ENCODE measurements at regions of chr9 and their contacts with region 1.

Region 1: GRCh38 chr9:84404095-84404686 is 63.6 kb upstream of the SLC28A3 start:
- DNase-seq: peak; percentile 22 to 34
- H3K4me3 ChIP-seq: no peak overlapping the region
- H3K27ac ChIP-seq: no peak overlapping the region
- H3K4me1 ChIP-seq: no peaks in the 10 kb centered on the region
- H3K27me3 ChIP-seq: no peaks in the 10 kb centered on the region
- CTCF ChIP-seq: peak; percentile 29 to 84 (median 70)
- POLR2A ChIP-seq: no peak

Region 2: DNA sequence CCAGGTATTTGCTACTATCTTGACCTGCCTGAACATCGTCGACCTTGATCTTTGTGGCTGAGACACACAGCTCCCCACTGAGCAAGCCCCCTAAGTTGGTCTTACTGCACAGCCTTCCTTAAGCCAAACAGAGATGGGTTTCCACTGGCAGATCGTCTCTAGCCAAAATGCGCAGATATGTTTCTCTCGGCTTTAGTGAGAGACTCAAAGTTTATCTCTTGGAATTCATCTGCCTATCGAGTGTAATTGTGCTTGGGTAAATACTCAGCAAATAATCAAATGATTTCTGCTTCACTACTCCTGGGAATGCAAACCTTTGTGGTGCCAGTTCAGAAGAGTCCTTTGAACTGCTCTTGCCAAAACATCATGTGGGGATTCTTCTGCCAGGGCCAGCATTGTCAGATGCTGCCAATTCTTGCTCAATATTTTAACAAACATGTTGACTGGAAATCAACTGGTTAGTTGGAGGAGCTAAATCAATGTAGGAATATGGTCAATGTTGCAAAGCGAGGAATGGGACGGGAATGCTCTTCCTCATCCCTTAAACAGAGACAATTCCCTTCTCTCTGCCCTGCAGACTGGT is 77.5 kb after region 1 on chr9:
- intact Hi-C with region 1: no loop called
- DNase-seq: peak; percentile 53 to 60
- H3K4me3 ChIP-seq: no peak overlapping the region
- H3K27ac ChIP-seq: peak overlapping the region; percentile 66 to 84 (median 76)
- H3K4me1 ChIP-seq: peaks cover 28 to 59% of the 10 kb centered on the region in 2 donors
- H3K27me3 ChIP-seq: no peaks in the 10 kb centered on the region
- CTCF ChIP-seq: no peak
- POLR2A ChIP-seq: no peak

Region 3: GRCh38 chr9:84668196-84669012 is 264.2 kb after region 1 on chr9:
- intact Hi-C with region 1: loop called (anchors 5 kb)
- DNase-seq: peak; percentile 92
- H3K4me3 ChIP-seq: peak overlapping the region; percentile 44 to 94 (median 45)
- H3K27ac ChIP-seq: peak overlapping the region; percentile 57 to 93 (median 89)
- H3K4me1 ChIP-seq: no peaks in the 10 kb centered on the region
- H3K27me3 ChIP-seq: no peaks in the 10 kb centered on the region
- CTCF ChIP-seq: peak; percentile 21 to 96 (median 75)
- POLR2A ChIP-seq: peak in 1 of 2 donors; percentile 37

Region 4: GRCh38 chr9:84759300-84759750 is 355.1 kb after region 1 on chr9:
- intact Hi-C with region 1: no loop called
- DNase-seq: no peak
- H3K4me3 ChIP-seq: no peak overlapping the region
- H3K27ac ChIP-seq: no peak overlapping the region
- H3K4me1 ChIP-seq: no peaks in the 10 kb centered on the region
- H3K27me3 ChIP-seq: no peaks in the 10 kb centered on the region
- CTCF ChIP-seq: no peak
- POLR2A ChIP-seq: no peak

Region 5: GRCh38 chr9:84781458-84781857 is 377.3 kb after region 1 on chr9:
- intact Hi-C with region 1: loop called (anchors 10 kb)
- DNase-seq: peak; percentile 24 to 29
- H3K4me3 ChIP-seq: no peak overlapping the region
- H3K27ac ChIP-seq: no peak overlapping the region
- H3K4me1 ChIP-seq: no peaks in the 10 kb centered on the region
- H3K27me3 ChIP-seq: no peaks in the 10 kb centered on the region
- CTCF ChIP-seq: peak in 4 of 6 experiments; percentile 31 to 66 (median 54)
- POLR2A ChIP-seq: no peak

Region 6: DNA sequence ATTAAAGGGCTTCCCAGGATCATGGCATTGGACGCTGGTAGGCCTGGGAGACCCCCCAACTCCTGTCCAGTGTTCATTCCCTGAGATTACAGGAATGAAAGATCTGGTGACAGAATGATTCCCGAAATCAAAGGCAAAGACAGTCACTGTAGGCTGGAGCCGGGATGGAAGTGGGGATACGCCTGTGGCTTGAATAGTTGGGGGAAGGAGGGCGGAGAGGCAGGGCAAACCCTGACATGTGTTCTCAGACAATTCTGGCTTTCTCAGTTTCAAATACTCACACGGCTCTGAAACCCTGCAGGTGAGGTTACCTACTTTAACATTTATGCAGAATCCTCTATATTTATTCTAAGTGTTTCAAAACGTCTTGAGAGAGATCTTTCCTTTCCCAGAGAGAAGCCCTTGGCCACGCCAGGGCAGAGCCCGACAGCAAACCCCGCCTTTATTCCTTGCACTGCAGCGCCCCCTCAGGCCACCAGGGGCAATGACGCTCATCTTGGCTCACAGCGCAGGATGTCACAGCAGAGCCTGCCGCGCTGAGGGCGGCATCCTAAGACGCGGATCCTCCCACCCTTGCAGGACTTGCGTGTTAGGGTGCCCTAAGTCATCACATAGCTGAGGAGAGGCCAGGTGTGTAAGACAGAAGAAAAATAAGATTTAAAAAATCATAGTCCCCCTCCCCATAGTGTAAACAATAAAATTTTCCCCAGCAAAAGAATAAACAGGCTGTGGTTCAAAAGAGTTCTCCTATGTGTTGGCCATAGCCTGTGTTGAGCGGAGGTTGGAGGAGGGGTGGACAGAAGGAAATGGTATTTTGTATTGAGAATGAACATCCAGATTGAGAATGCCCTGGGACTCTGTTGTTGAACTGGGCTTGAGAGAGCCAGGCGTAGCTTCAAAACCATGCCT is 549.9 kb after region 1 on chr9:
- intact Hi-C with region 1: loop called (anchors 5 kb)
- DNase-seq: peak; percentile 79 to 89
- H3K4me3 ChIP-seq: no peak overlapping the region
- H3K27ac ChIP-seq: no peak overlapping the region
- H3K4me1 ChIP-seq: peaks cover 0 to 5% of the 10 kb centered on the region in 2 donors
- H3K27me3 ChIP-seq: no peaks in the 10 kb centered on the region
- CTCF ChIP-seq: peak; percentile 88 to 96 (median 92)
- POLR2A ChIP-seq: no peak

Measured in thyroid gland (tissue), 4 donors.